B cell (primary cell): ENCODE measurements at regions of chr7 and their contacts with region 1.

Region 1: DNA sequence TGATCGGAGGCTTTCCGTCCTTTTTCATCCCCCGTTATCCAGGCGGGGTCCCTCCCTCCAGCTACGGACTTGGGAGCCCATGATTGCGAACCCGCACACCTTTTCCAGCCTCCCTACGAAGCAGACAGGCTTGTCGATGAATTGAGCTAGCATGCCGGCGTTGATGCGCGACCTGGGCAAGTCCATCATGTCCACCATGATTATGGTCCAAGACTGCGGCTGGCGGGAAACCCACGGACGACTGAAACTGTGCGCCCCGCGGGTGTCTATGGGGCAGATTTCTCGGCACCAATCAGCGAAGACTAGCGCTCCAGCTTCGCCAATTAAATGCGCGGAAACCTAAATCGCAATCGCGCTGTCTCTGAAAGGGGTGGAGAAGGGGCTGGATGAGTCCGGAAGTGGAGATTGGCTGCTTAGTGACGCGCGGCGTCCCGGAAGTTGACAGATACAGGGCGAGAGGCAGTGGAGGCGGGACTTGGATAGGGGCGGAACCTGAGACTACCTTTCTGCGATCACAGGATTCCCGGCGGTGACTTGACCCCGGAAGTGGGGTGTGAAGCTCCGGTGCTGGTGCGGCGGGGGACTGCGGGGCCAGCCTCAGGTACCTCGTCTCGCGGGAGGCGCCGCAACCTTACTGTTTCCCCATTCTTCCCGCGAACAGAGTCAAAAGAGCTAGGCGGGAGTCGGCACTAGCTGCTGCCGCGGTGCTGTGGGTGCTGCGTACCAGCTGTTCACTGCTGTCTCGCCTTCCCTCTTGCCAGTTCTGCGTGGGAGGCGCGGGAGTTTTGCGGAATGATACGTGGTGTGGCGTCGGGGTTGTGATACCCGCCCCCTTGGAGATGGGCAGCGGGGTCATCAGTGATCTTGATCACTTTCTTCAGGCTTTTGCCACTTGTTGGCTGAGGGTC is at the start of gene UMAD1:
- DNase-seq: peak; percentile 99
- ATAC-seq: peak; percentile 91
- H3K4me3 ChIP-seq: peak within 1 kb of the TSS; percentile 83 to 99 (median 93)
- H3K4me3 Mint-ChIP-seq: peak within 1 kb of the TSS; percentile 87
- H3K27ac ChIP-seq: peak within 1 kb of the TSS; percentile 98 to 99
- H3K27ac Mint-ChIP-seq: peak within 1 kb of the TSS; percentile 98
- H3K4me1 ChIP-seq: peaks cover 15 to 17% of the 10 kb centered on the region in 2 donors
- H3K4me1 Mint-ChIP-seq: peaks cover 45% of the 10 kb centered on the region
- H3K27me3 ChIP-seq: no peaks in the 10 kb centered on the region
- H3K27me3 Mint-ChIP-seq: no peaks in the 10 kb centered on the region
- CTCF ChIP-seq: no peak
- total RNA-seq, gene UMAD1: 25.9 and 27.3 TPM in 2 replicates

Region 2: DNA sequence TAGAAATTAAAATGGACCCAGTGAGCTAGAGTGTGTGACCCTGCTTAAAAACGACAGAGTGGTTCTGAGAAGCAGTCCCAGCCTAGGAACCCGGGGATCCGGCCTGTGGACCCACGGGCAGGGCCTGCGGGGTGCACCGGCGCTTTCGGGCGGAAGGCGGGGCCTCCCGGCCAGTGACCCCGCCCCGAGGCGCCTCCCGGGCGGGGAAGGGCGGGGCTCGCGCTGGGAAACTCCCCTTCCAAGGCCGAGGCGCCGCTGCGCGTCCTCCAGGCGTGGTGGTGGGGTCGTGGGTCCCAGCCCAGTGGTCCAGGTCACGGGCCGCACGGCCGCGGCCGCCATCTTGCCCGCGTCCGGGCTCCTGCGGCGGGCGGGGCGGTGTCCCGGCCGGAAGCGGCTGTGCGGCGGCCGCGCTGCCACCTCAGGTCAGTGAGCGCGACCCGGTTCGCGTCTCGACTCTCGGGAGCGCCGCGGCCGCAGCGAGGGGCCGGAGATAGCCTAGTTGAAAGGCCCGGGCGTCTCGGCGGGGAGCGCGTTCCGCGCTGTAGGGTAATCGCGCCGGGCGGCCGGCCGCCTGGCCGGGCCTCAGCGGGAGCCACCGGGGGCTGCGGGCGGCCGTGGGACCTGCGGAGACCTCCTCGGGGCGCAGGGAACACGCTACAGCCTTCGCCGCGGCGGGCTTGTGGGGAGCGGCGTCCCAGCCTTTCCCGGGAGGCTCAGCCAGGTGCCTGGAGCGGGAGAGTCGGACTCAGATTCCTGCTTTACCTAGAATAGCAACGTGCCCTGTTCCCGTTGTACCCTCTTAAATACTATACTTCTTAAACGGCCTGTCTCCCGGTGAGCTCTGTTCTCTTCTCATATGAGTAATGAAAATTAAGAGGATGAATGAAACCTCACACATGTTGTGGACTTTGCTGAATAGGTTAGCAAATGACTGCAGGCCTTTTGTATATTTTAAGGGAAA is 73.5 kb before region 1 on chr7 and contains the start of gene MIOS:
- CTCF ChIA-PET with region 1: no interaction called
- POLR2A ChIA-PET with region 1: interaction called, 3 read pairs
- intact Hi-C with region 1: loop called (anchors 1 kb)
- DNase-seq: peak; percentile 92
- ATAC-seq: peak; percentile 85
- H3K4me3 ChIP-seq: peak within 1 kb of the TSS; percentile 65 to 94 (median 81)
- H3K4me3 Mint-ChIP-seq: peak within 1 kb of the TSS; percentile 83
- H3K27ac ChIP-seq: peak within 1 kb of the TSS; percentile 93 to 99
- H3K27ac Mint-ChIP-seq: peak within 1 kb of the TSS; percentile 90
- H3K4me1 ChIP-seq: peaks cover 41 to 44% of the 10 kb centered on the region in 2 donors
- H3K4me1 Mint-ChIP-seq: peaks cover 35% of the 10 kb centered on the region
- H3K27me3 ChIP-seq: no peaks in the 10 kb centered on the region
- H3K27me3 Mint-ChIP-seq: no peaks in the 10 kb centered on the region
- CTCF ChIP-seq: no peak
- total RNA-seq, gene MIOS: 48.7 and 50.1 TPM in 2 replicates

Region 3: GRCh38 chr7:7857143-7857583 is 216.7 kb after region 1 on chr7:
- CTCF ChIA-PET with region 1: no interaction called
- POLR2A ChIA-PET with region 1: no interaction called
- intact Hi-C with region 1: loop called (anchors 1 kb)
- DNase-seq: peak; percentile 71
- ATAC-seq: peak; percentile 88
- H3K4me3 ChIP-seq: peak overlapping the region in 1 of 5 experiments; percentile 28
- H3K4me3 Mint-ChIP-seq: peak overlapping the region; percentile 32
- H3K27ac ChIP-seq: peak overlapping the region; percentile 85 to 87
- H3K27ac Mint-ChIP-seq: peak overlapping the region; percentile 94
- H3K4me1 ChIP-seq: peaks cover 31% of the 10 kb centered on the region in 2 donors
- H3K4me1 Mint-ChIP-seq: peaks cover 32% of the 10 kb centered on the region
- H3K27me3 ChIP-seq: no peaks in the 10 kb centered on the region
- H3K27me3 Mint-ChIP-seq: no peaks in the 10 kb centered on the region
- CTCF ChIP-seq: no peak

Region 4: DNA sequence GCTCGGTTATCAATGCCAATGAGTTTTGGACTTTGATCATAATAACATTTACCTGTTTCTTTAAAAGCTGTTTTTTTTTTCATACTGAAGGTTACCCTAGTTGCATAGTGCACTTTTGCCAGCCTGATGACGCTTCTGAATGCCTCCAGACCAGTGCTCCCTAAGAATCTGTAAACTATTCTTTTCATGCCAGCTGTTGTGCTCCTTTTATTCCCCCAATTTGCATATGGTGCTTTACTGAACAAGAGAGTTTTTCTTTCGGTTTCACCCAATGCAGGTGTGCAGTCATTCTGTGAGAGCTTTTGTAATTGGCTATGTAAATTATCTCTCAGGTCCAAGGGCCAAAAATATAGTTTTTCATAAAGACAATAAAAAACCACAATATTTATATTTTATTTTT is 280.0 kb after region 1 on chr7:
- CTCF ChIA-PET with region 1: no interaction called
- POLR2A ChIA-PET with region 1: interaction called, 4 read pairs
- intact Hi-C with region 1: loop called (anchors 1 kb)
- DNase-seq: peak; percentile 80
- ATAC-seq: peak; percentile 93
- H3K4me3 ChIP-seq: peak overlapping the region in 2 of 5 experiments; percentile 30 to 48
- H3K4me3 Mint-ChIP-seq: peak overlapping the region; percentile 66
- H3K27ac ChIP-seq: peak overlapping the region; percentile 53 to 60
- H3K27ac Mint-ChIP-seq: peak overlapping the region; percentile 66
- H3K4me1 ChIP-seq: peaks cover 33 to 44% of the 10 kb centered on the region in 2 donors
- H3K4me1 Mint-ChIP-seq: peaks cover 59% of the 10 kb centered on the region
- H3K27me3 ChIP-seq: no peaks in the 10 kb centered on the region
- H3K27me3 Mint-ChIP-seq: no peaks in the 10 kb centered on the region
- CTCF ChIP-seq: no peak

Region 5: DNA sequence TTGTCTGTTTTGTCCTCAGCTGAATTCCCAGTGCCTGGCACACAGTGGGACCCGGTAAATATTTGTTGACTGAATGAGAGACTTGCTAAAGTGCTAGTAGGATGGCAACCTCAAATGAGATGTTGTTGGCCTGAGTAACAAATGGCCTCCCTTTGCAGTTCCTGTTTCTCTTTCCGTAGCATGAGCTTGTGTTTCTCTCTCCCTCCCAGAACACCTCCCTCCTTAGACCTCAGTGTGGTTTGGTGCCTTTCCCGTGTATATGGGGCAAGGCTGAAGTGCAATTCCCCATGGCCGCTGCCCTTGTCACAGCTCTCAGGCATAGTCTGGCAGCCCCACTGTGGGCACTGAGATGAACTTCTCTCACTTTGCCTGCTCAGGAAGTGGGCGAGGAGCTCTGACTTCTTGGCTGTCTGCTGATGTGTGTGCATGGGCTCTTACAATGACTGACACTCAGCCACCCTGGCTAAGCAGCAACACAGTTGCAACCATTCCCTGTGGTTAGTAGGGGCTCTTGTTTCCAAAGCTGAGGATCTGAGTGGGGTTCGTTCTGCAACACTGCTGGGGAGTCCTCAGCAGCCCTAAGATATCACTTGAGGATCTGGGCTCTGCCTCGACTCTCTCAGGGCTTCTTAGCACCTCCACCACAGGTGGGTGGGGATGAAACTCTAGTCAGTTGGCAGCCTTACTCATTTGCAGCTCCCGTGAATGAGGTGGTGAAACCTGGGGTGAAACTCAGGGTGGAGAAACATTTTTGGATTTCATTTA is 485.4 kb after region 1 on chr7:
- CTCF ChIA-PET with region 1: no interaction called
- POLR2A ChIA-PET with region 1: no interaction called
- intact Hi-C with region 1: no loop called
- DNase-seq: peak; percentile 73
- ATAC-seq: peak; percentile 92
- H3K4me3 ChIP-seq: peak overlapping the region in 2 of 5 experiments; percentile 16 to 37
- H3K4me3 Mint-ChIP-seq: peak overlapping the region; percentile 69
- H3K27ac ChIP-seq: peak overlapping the region; percentile 58 to 74
- H3K27ac Mint-ChIP-seq: peak overlapping the region; percentile 95
- H3K4me1 ChIP-seq: peaks cover 18 to 33% of the 10 kb centered on the region in 2 donors
- H3K4me1 Mint-ChIP-seq: peaks cover 57% of the 10 kb centered on the region
- H3K27me3 ChIP-seq: no peaks in the 10 kb centered on the region
- H3K27me3 Mint-ChIP-seq: no peaks in the 10 kb centered on the region
- CTCF ChIP-seq: no peak